Activated naive CD4-positive, alpha-beta T cell treated with anti-CD3 and anti-CD28 coated beads for 36 hours (primary cell): ENCODE measurements at regions of chr3 and their contacts with region 1.

Region 1: GRCh38 chr3:158295771-158296170 is 185.9 kb downstream of the RSRC1 start:
- DNase-seq: no peak
- H3K4me3 Mint-ChIP-seq: no peak overlapping the region
- H3K27ac Mint-ChIP-seq: no peak overlapping the region
- H3K4me1 Mint-ChIP-seq: no peaks in the 10 kb centered on the region
- H3K27me3 Mint-ChIP-seq: no peaks in the 10 kb centered on the region

Region 2: DNA sequence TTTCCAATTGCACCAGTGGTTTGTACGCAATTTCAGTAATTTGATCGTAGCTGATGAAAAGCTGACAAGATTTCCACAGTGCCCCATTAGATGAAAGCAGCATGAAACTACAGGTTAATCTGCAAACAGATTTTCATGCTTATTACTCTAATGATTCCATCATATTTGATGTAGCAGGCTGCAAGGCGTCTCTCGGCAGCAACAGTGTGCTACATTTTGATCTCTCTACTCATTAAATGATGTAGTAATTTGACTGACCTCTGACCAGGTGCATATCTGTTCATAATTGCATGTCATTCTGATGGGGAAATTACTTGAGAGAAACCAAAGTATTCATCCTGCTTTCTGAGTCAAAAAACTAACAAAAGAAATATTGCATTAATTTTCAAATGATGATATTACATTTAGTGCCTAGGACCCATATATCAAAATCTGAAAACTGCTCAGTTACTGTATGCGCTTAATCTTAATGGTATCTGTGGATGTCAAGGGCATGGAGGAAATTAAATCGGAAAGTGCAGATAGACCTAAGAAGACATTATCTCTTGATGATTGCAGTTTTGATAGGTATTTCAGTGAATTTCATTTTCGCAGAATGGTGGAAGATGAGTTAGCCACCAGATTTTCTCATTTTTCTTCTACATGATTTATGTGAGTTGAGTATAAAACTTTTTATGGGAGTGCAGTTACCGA is 12.6 kb after region 1 on chr3:
- CTCF ChIA-PET with region 1: interaction called, 6 read pairs
- intact Hi-C with region 1: loop called (anchors 1 kb)
- DNase-seq: no peak
- H3K4me3 Mint-ChIP-seq: no peak overlapping the region
- H3K27ac Mint-ChIP-seq: no peak overlapping the region
- H3K4me1 Mint-ChIP-seq: peaks cover 1% of the 10 kb centered on the region
- H3K27me3 Mint-ChIP-seq: no peaks in the 10 kb centered on the region

Region 3: GRCh38 chr3:158649791-158650190 is 354.0 kb after region 1 on chr3:
- CTCF ChIA-PET with region 1: no interaction called
- intact Hi-C with region 1: no loop called
- DNase-seq: no peak
- H3K4me3 Mint-ChIP-seq: no peak overlapping the region
- H3K27ac Mint-ChIP-seq: no peak overlapping the region
- H3K4me1 Mint-ChIP-seq: peaks cover 27% of the 10 kb centered on the region
- H3K27me3 Mint-ChIP-seq: no peaks in the 10 kb centered on the region